Mammary epithelial cell (primary cell): ENCODE measurements at regions of chr12 and their contacts with region 1.

Region 1: DNA sequence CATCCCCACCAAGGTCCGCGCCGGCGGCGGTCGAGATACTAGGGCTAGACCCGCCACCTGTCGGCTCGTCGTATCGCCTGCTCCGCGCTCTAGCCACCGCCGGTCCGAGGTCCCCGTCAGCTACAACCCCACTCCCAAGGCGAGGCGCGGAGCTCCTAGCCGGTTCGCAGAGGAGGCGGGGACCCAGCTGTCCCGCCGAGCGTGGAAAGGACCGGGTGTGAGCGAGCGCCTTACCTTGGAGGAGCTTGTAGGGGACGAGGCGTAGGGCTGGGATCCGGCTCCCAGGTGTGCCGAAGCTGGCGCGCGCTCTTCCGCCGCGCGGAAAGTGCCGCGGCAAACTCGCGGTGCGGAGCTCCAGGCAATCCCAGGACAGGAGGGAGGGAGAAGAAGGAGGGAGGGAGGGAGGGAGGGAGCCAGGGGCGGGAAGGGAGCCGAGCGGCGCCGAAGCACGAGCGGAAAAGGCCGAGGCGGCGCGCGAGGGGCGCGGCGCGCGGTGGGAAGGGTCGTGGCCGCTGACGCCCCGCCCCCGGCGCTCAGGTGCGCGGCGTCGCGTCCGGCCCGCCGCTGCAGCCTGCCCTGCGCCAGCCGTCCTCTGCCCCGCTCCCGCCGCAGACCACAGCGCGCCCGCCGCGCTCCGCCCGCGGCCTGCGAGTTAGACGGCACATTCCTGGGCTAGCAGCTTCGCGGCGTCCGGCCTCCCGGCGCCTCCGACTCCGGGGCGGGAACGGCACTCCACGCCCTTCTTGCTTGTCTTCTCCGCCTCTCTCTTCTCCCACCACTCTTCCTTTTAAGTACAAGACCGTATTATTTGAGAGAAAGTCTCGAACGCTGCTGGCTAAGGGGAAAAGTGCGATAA is at the start of gene PAWR:
- DNase-seq: peak; percentile 94
- H3K4me3 ChIP-seq: peak within 1 kb of the TSS; percentile 73 to 81 (median 78)
- H3K27ac ChIP-seq: peak within 1 kb of the TSS; percentile 99
- H3K4me1 ChIP-seq: peaks cover 20% of the 10 kb centered on the region
- H3K27me3 ChIP-seq: no peaks in the 10 kb centered on the region
- CTCF ChIP-seq: peak in 1 of 2 donors; percentile 41
- total RNA-seq, gene PAWR: 108 to 179 TPM

Region 2: DNA sequence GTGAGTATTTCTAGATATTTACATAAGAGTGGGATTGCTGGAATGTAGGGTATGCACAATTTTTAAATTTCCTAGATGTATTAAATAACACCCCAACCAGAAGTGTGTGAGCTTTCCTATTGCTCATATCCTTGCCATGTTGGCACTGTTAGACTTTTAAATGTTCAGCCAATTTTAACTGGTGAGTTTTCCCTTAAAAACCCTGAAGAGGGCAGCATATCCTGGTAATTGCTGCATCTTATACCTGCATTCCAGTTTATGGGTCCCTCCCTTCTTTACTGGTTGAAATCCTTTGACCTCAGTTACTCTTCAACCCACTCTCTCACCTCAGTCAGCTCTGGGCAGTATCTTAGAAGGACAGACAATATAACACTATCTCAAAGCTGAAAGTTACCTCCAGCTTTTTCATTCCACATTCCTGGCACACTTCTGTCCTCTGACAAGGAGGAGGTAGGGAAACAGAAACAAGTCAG is 270.7 kb before region 1 on chr12:
- CTCF ChIA-PET with region 1: interaction called, 41 read pairs
- dilution Hi-C with region 1: no loop called
- in situ Hi-C with region 1: no loop called
- intact Hi-C with region 1: loop called (anchors 1 kb)
- DNase-seq: peak; percentile 76
- H3K4me3 ChIP-seq: no peak overlapping the region
- H3K27ac ChIP-seq: peak overlapping the region; percentile 55
- H3K4me1 ChIP-seq: peaks cover 58% of the 10 kb centered on the region
- H3K27me3 ChIP-seq: no peaks in the 10 kb centered on the region
- CTCF ChIP-seq: peak; percentile 51 to 70

Region 3: DNA sequence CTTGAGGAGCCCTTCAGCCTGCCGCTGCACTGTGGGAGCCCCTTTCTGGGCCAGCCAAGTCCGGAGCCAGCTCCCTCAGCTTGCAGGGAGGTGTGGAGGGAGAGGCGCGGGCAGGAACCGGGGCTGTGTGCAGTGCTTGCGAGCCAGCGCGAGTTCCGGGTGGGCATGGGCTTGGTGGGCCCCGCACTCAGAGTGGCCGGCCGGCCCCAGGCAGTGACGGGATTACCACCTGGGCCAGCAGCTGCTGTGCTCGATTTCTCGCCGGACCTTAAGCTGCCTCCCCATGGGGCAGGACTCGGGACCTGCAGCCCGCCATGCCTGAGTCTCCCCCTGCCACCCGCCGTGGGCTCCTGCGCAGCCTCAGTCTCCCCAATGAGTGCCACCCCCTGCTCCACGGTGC is 117.0 kb before region 1 on chr12:
- CTCF ChIA-PET with region 1: no interaction called
- dilution Hi-C with region 1: loop called (anchors 10 kb)
- in situ Hi-C with region 1: no loop called
- intact Hi-C with region 1: no loop called
- DNase-seq: no peak
- H3K4me3 ChIP-seq: no peak overlapping the region
- H3K27ac ChIP-seq: no peak overlapping the region
- H3K4me1 ChIP-seq: no peaks in the 10 kb centered on the region
- H3K27me3 ChIP-seq: no peaks in the 10 kb centered on the region
- CTCF ChIP-seq: no peak

Region 4: DNA sequence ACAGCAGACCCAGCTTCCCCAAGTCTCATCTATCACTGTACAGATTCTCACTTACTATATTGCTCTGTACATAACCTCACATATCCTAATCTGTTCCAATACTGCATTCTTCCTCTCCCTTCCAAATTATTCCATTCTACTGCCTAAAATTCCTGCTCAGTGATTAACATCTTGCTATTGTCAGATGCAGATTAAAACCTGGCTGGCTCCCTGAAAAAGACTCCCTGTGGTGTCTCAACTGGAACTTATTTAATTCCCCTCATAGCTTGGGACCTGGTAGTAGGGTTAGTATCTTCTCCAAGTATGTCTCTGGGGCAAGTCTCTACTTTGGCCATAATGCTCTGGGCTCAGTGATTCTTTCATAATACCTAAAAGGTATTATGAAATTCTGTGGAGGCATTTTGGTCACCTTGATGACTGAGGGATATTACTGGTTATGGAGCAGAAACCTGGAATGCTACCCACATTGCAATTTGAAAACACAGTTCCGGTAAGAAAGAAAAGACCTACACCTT is 55.9 kb before region 1 on chr12:
- CTCF ChIA-PET with region 1: no interaction called
- dilution Hi-C with region 1: no loop called
- in situ Hi-C with region 1: no loop called
- intact Hi-C with region 1: loop called (anchors 1 kb)
- DNase-seq: peak; percentile 81
- H3K4me3 ChIP-seq: no peak overlapping the region
- H3K27ac ChIP-seq: peak overlapping the region; percentile 69
- H3K4me1 ChIP-seq: peaks cover 18% of the 10 kb centered on the region
- H3K27me3 ChIP-seq: no peaks in the 10 kb centered on the region
- CTCF ChIP-seq: no peak

Region 5: DNA sequence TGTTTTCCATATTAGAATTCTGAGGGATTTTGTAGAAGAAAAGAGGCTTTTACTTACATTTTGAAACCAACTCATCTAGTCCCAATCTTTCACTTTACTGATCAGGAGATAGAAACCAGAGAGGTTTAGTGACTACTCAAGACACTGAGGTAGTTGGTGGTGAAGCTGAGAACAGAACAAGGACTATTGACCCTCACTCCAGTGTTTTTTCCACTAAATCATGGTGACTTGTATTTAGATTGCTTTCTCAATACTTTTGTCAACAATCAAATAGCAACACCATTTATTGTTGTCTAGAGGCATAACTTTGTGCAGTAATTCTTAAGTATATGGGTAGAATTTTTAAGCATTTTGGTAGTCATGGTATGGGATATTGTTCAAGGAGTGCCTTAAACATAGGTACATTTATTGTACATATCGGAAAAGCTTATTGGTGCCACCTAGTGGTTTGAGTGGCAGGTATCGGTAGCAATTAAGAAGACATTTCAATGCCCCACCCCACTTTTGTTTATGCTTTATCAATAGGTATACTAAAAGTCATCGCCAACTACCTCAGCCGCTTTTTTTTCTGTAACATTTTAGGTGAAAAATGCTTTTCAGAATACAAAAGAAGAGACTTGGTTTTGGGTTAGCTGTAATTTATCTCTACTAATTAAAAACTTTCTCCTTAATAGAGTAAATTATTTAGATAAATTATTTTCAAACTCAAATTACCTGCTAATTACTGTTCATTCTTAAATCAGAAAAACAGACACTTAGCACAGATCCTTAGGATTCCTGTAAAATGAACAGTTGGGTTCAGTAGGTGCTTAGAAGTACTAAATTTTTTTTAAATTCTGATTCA is 47.2 kb after region 1 on chr12:
- CTCF ChIA-PET with region 1: no interaction called
- dilution Hi-C with region 1: no loop called
- in situ Hi-C with region 1: no loop called
- intact Hi-C with region 1: loop called (anchors 1 kb)
- DNase-seq: peak; percentile 57
- H3K4me3 ChIP-seq: no peak overlapping the region
- H3K27ac ChIP-seq: no peak overlapping the region
- H3K4me1 ChIP-seq: no peaks in the 10 kb centered on the region
- H3K27me3 ChIP-seq: no peaks in the 10 kb centered on the region
- CTCF ChIP-seq: peak; percentile 62 to 75

Region 6: GRCh38 chr12:80044694-80045046 is 353.8 kb after region 1 on chr12:
- CTCF ChIA-PET with region 1: no interaction called
- dilution Hi-C with region 1: no loop called
- in situ Hi-C with region 1: no loop called
- intact Hi-C with region 1: loop called (anchors 5 kb)
- DNase-seq: peak; percentile 84
- H3K4me3 ChIP-seq: no peak overlapping the region
- H3K27ac ChIP-seq: peak overlapping the region; percentile 41
- H3K4me1 ChIP-seq: peaks cover 17% of the 10 kb centered on the region
- H3K27me3 ChIP-seq: no peaks in the 10 kb centered on the region
- CTCF ChIP-seq: no peak

Region 7: GRCh38 chr12:80121661-80122060 is 430.8 kb after region 1 on chr12:
- CTCF ChIA-PET with region 1: no interaction called
- dilution Hi-C with region 1: no loop called
- in situ Hi-C with region 1: no loop called
- intact Hi-C with region 1: no loop called
- DNase-seq: no peak
- H3K4me3 ChIP-seq: no peak overlapping the region
- H3K27ac ChIP-seq: no peak overlapping the region
- H3K4me1 ChIP-seq: no peaks in the 10 kb centered on the region
- H3K27me3 ChIP-seq: no peaks in the 10 kb centered on the region
- CTCF ChIP-seq: no peak